Activated B cell treated with CpG ODN at 0.5 μM for 24 hours (primary cell): ENCODE measurements at regions of chr2 and their contacts with region 1.

Region 1: GRCh38 chr2:204145263-204145751 is 208.7 kb downstream of the ICOS start:
- DNase-seq: peak; percentile 42
- ATAC-seq: peak; percentile 71
- H3K4me3 Mint-ChIP-seq: peak overlapping the region; percentile 66
- H3K27ac Mint-ChIP-seq: no peak overlapping the region
- H3K4me1 Mint-ChIP-seq: peaks cover 9% of the 10 kb centered on the region
- H3K27me3 Mint-ChIP-seq: peaks cover 14% of the 10 kb centered on the region
- CTCF ChIP-seq: peak; percentile 90

Region 2: DNA sequence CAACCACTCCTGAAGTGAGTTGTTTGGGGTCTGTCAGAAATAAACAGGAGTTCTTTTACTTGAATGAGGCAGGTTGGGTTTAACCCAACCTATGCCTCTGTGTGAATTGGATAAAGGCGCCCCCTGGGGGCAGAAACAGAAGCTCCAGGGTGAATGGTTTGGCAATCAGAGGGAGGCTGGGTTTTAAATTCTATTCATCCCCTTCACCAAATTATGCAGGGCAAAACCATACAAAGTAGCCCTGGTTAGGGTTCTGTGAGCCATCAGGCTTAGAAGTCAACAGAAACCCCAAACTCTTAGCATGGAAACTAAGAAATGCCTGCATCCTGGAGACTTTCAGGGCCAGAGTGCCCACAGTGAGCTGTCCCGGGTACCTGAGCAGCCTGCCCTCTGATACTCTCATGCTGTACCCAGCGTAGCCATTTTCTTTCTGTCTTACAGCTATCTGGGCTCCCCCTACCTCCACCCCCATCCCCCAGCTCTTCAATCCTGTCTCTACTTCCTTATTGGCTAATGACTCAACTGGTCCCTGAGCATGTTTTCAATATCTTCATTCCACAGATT is 32.8 kb after region 1 on chr2:
- CTCF ChIA-PET with region 1: interaction called, 11 read pairs
- POLR2A ChIA-PET with region 1: no interaction called
- intact Hi-C with region 1: loop called (anchors 1 kb)
- DNase-seq: no peak
- ATAC-seq: no peak
- H3K4me3 Mint-ChIP-seq: no peak overlapping the region
- H3K27ac Mint-ChIP-seq: no peak overlapping the region
- H3K4me1 Mint-ChIP-seq: no peaks in the 10 kb centered on the region
- H3K27me3 Mint-ChIP-seq: no peaks in the 10 kb centered on the region
- CTCF ChIP-seq: no peak

Region 3: DNA sequence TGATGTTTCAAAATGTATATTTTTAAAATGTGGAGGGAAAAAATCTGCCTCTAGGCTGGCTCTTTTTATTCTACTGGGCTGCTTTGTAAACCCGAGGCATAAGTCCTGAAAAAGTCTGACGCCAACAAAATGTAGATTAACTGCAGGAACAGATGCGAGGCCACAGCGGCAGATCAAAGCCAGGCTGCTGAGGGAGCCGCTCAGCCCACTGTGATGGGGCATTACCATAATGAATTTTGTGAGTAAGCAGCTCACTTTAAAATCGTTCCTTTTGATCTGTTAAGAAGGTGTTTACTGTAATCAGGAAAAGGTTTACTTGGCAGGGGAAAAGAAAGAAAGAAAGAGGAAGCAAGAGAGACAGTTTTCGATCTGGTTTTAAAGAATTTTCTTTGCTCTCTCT is 60.2 kb after region 1 on chr2:
- CTCF ChIA-PET with region 1: no interaction called
- POLR2A ChIA-PET with region 1: no interaction called
- intact Hi-C with region 1: no loop called
- DNase-seq: no peak
- ATAC-seq: no peak
- H3K4me3 Mint-ChIP-seq: no peak overlapping the region
- H3K27ac Mint-ChIP-seq: no peak overlapping the region
- H3K4me1 Mint-ChIP-seq: no peaks in the 10 kb centered on the region
- H3K27me3 Mint-ChIP-seq: peaks cover 6% of the 10 kb centered on the region
- CTCF ChIP-seq: no peak

Region 4: DNA sequence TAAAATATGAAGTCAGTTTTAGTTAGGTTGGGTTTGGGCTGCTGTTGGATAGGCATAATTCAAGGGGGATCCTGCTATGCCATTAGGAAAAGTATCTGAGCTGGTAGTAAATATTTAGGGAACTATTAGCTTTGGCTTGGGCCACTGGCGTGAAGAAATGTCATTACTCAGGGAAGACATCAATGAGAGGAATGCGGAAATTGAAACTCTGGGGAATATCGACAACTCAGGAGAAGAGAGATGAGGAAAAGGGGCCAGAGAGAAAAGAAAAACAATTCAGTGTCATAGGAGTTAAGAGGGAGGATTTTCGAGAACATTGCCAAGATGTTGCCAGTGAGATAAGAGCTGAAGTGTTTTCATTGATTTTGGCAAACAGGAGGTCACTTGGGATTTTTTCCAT is 250.2 kb after region 1 on chr2:
- CTCF ChIA-PET with region 1: no interaction called
- POLR2A ChIA-PET with region 1: no interaction called
- intact Hi-C with region 1: no loop called
- DNase-seq: no peak
- ATAC-seq: no peak
- H3K4me3 Mint-ChIP-seq: no peak overlapping the region
- H3K27ac Mint-ChIP-seq: no peak overlapping the region
- H3K4me1 Mint-ChIP-seq: no peaks in the 10 kb centered on the region
- H3K27me3 Mint-ChIP-seq: no peaks in the 10 kb centered on the region
- CTCF ChIP-seq: no peak